Ovary (tissue), 10 donors: ENCODE measurements at regions of chr14 and their contacts with region 1.

Region 1: DNA sequence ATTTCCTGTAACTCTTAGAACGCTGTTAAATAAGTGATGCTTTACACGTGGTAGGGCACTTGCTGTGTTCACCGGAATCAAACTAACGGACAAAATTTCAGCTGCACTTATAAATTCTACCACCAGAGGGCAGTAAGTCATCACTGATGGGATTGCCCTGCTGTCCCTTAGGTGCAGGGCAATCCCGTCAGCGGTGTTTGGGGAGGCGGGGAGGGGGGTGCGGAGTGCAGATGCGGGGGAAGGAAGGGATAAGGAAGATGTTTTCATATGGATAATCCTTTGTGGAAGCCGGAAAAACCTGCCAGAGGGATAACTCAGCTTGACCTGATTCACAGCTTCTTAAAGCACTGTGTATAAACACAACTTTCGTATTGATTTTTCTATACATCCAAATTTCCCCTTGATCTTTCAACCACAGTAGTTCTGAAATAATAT is 21.7 kb upstream of the SLC10A1 start:
- DNase-seq: peak; percentile 17 to 47 (median 31)
- H3K4me3 ChIP-seq: no peak overlapping the region
- H3K27ac ChIP-seq: no peak overlapping the region
- H3K4me1 ChIP-seq: no peaks in the 10 kb centered on the region
- H3K27me3 ChIP-seq: no peaks in the 10 kb centered on the region
- CTCF ChIP-seq: peak; percentile 38 to 77 (median 64)
- EP300 ChIP-seq: no peak
- POLR2A ChIP-seq: no peak

Region 2: DNA sequence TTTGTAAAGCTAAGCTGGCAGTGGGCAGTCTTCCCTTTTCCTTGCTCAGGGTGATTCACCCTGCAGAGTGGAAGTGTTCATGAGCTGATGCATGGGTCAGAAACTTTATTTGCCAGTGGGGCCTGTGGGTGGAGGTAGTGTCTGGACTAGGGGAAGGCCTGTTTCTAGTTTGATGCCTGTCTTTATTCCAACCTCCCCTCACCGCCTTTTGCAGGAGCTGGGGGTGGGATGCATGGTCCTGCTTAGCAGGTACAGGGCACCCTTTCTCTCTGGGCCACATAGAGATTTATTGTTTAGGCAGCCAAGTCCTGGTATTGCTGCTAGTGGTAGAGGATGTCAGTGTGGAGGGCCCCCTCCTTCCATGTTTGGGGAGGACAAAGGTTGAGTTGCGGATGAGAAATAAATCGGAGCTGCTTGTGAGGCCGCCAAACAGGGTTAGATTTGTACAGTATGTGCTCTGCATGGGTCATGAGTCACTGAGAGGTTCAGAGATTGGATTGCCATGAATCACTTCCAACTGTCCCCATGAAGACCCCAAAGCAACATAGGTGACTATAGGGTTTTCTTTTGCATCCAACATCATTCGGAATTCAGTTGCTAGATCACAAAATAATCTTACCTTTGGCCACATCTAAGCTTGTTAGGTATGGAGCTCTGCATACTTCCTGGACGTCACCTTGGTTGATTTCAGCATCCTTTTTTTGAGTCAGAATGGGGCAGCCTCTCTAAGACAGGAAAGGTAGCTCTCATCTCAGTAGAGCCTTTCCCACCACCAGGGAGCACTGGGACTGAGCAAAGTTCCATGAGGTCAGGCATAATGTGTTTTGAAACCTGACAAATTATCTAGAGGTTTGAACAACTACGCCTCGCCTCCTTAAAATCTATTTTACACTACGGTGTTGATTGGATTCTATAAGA is 69.2 kb after region 1 on chr14:
- intact Hi-C with region 1: no loop called
- DNase-seq: no peak
- H3K4me3 ChIP-seq: no peak overlapping the region
- H3K27ac ChIP-seq: no peak overlapping the region
- H3K4me1 ChIP-seq: no peaks in the 10 kb centered on the region
- H3K27me3 ChIP-seq: no peaks in the 10 kb centered on the region
- CTCF ChIP-seq: no peak
- EP300 ChIP-seq: no peak
- POLR2A ChIP-seq: no peak

Region 3: GRCh38 chr14:70027785-70028428 is 209.1 kb after region 1 on chr14:
- intact Hi-C with region 1: loop called (anchors 1 to 5 kb)
- DNase-seq: peak; percentile 55 to 82 (median 64)
- H3K4me3 ChIP-seq: no peak overlapping the region
- H3K27ac ChIP-seq: no peak overlapping the region
- H3K4me1 ChIP-seq: no peaks in the 10 kb centered on the region
- H3K27me3 ChIP-seq: no peaks in the 10 kb centered on the region
- CTCF ChIP-seq: peak; percentile 34 to 62 (median 57)
- EP300 ChIP-seq: no peak
- POLR2A ChIP-seq: no peak